ENCODE measurements at regions of chr22 and their contacts with region 1.

Region 1: GRCh38 chr22:37696657-37697537 is at the start of gene TRIOBP:
- DNase-seq: peak; percentile 98 to 100
- H3K4me3 ChIP-seq: no peak within 1 kb of the TSS
- H3K27ac ChIP-seq: peak within 1 kb of the TSS in 1 of 3 donors; percentile 5
- H3K4me1 ChIP-seq: peaks cover 10% of the 10 kb centered on the region in 2 donors
- H3K27me3 ChIP-seq: no peaks in the 10 kb centered on the region
- CTCF ChIP-seq: peak in 5 of 6 experiments; percentile 24 to 64 (median 55)
- POLR2A ChIP-seq: peak in 1 of 2 donors; percentile 29
- total RNA-seq, gene TRIOBP: 120 to 150 (median 140) TPM

Region 2: DNA sequence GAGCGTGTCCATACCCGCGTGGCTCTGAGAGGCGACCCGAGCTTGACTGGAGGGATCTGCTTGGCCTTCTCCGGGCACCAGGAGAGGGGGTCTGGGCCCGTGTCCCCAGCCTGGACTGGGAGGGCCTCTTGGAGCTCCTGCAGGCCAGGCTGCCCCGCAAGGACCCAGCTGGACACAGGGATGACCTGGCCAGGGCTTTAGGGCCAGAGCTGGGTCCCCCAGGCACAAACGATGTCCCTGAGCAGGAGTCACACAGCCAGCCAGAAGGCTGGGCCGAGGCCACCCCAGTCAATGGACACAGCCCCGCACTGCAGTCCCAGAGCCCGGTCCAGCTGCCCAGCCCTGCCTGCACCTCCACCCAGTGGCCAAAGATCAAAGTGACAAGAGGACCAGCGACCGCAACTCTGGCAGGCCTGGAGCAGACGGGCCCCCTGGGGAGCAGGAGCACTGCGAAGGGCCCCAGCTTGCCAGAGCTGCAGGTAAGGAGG is 38.1 kb after region 1 on chr22:
- intact Hi-C with region 1: loop called (anchors 5 kb)
- DNase-seq: peak; percentile 60 to 61
- H3K4me3 ChIP-seq: no peak overlapping the region
- H3K27ac ChIP-seq: no peak overlapping the region
- H3K4me1 ChIP-seq: peaks cover 0 to 13% of the 10 kb centered on the region in 2 donors
- H3K27me3 ChIP-seq: no peaks in the 10 kb centered on the region
- CTCF ChIP-seq: peak in 5 of 6 experiments; percentile 10 to 51 (median 45)
- POLR2A ChIP-seq: no peak

Region 3: DNA sequence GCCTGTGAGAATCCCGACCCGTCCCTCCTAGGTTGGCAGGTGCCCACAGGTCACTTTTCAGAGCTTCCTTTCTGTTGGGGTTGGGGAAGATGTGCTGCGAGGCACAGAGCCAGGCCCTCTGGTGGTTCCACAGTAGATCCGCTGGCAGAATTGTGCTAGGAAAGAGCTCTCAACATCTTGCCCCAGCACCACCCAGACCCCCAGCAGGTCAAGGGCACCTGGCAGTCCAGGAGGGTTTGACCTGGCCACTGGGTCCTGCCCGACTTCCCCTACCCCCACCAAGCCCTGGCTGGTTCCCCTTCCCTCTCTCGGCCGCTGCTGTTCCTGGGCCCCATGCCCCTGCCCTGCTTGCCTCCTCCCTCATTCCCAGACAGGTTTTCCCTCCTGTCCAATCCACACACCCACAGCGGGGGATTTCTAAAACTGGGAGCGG is 84.6 kb after region 1 on chr22:
- intact Hi-C with region 1: no loop called
- DNase-seq: peak; percentile 72 to 80
- H3K4me3 ChIP-seq: no peak overlapping the region
- H3K27ac ChIP-seq: peak overlapping the region; percentile 6 to 42 (median 36)
- H3K4me1 ChIP-seq: peaks cover 35 to 57% of the 10 kb centered on the region in 2 donors
- H3K27me3 ChIP-seq: no peaks in the 10 kb centered on the region
- CTCF ChIP-seq: peak in 5 of 6 experiments; percentile 14 to 47 (median 39)
- POLR2A ChIP-seq: no peak